Activated T-helper 1 cell treated with anti-CD3 and anti-CD28 coated beads, Interleukin-12 subunit alpha, Interleukin-12 subunit beta, Interleukin-2, Interleukin-4 antibody, amounts not matched to agents 30 ng/mL and 10 ng/mL and 1 ng/mL, durations not matched to agents 14 hours and 24 hours and 36 hours (primary cell): ENCODE measurements at regions of chr1 and their contacts with region 1.

Region 1: GRCh38 chr1:147129116-147129873 is 43.0 kb downstream of the PRKAB2 start:
- DNase-seq: no peak
- H3K4me3 Mint-ChIP-seq: no peak overlapping the region
- H3K27ac Mint-ChIP-seq: no peak overlapping the region
- H3K4me1 Mint-ChIP-seq: no peaks in the 10 kb centered on the region
- H3K27me3 Mint-ChIP-seq: peaks cover 23% of the 10 kb centered on the region

Region 2: DNA sequence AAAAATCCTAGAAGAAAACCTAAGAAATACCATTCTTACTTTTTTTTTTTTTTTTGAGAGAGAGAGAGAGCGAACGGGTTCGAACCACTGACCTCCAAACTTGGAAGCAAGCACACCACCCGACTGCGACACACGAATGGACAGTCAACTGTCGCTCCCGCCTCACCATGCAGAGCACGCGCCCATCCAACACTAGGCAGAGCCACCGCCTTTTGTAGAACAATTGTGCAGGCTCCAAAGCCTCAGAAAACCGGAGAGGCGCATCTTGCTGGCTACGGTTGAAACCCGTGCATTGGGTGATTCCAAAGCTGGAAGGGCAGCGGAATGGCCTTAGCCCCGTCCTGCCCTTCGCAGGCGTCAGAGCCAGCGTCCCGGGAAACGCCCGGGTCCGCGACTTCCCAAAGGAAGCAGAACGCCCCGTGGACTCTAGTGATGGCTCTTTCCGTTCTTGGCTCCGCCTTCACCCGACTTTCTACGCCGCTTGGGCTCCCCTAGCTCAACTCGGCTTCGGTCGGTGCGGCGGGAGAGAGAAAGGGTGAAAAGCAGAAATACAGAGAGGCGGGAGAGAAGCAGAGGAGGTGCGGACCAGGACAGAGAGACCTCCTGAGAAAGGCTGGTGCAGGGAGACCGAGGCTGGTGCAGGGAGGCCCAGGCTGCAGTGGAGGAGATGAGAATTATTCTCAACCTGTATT is 56.8 kb before region 1 on chr1:
- intact Hi-C with region 1: loop called (anchors 10 kb)
- DNase-seq: no peak
- H3K4me3 Mint-ChIP-seq: peak overlapping the region; percentile 64
- H3K27ac Mint-ChIP-seq: no peak overlapping the region
- H3K4me1 Mint-ChIP-seq: peaks cover 21% of the 10 kb centered on the region
- H3K27me3 Mint-ChIP-seq: peaks cover 68% of the 10 kb centered on the region

Region 3: GRCh38 chr1:147115496-147115895 is 13.8 kb before region 1 on chr1:
- intact Hi-C with region 1: no loop called
- DNase-seq: no peak
- H3K4me3 Mint-ChIP-seq: no peak overlapping the region
- H3K27ac Mint-ChIP-seq: no peak overlapping the region
- H3K4me1 Mint-ChIP-seq: no peaks in the 10 kb centered on the region
- H3K27me3 Mint-ChIP-seq: peaks cover 38% of the 10 kb centered on the region